Heart right ventricle (tissue), 16 donors: ENCODE measurements at regions of chr2 and their contacts with region 1.

Region 1: DNA sequence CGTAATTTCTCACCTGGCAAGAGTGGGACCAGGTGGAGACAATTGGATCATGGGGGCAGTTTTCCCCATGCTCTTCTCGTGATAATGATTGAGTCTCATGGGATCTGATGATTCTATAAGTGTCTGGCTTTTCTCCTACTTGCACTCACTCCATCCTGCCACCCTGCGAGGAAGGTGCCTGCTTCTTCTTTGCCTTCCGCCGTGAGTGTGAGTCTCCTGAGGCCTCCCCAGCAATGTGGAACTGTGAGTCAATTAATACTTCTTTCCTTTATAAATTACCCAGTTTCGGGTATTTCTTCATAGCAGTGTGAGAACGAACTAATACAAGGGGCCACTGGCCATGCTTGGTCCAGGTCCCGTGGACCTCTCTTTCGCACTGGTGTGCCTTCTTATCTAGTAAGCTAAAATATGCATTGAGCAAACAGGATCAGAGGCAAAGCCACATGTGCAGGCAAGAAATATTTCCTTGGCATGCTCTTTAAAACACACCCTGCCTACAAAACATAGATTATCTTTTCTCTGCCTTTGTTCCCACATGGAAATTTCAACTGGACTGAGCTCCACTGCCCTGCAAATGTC is 821.1 kb downstream of the TRIB2 start:
- DNase-seq: no peak
- ATAC-seq: no peak
- H3K4me3 ChIP-seq: no peak overlapping the region
- H3K27ac ChIP-seq: no peak overlapping the region
- H3K4me1 ChIP-seq: no peaks in the 10 kb centered on the region
- H3K27me3 ChIP-seq: no peaks in the 10 kb centered on the region
- CTCF ChIP-seq: no peak

Region 2: GRCh38 chr2:13401312-13401711 is 136.5 kb before region 1 on chr2:
- intact Hi-C with region 1: no loop called
- DNase-seq: no peak
- ATAC-seq: no peak
- H3K4me3 ChIP-seq: no peak overlapping the region
- H3K27ac ChIP-seq: no peak overlapping the region
- H3K4me1 ChIP-seq: no peaks in the 10 kb centered on the region
- H3K27me3 ChIP-seq: no peaks in the 10 kb centered on the region
- CTCF ChIP-seq: no peak

Region 3: DNA sequence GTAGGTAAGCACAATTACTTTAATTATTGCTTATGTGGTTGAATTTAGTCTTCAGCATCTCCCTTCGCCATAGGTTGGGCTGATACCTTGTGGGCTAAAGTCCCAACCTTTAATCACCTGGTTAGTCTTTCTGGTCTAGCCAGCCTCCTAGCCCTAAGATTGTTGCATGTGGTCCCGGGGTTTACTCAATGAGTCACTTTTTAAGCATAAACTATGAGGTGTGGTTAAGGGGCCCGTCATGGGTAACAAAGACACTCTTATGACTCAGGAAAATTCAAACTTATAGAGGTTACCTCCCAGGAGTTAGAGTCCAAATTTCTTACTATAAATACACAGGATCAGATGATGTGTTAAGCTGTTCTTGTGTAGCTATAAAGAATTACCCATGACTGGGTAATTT is 20.5 kb after region 1 on chr2:
- intact Hi-C with region 1: loop called in 1 of 10 experiments (anchors 2 kb)
- DNase-seq: no peak
- ATAC-seq: no peak
- H3K4me3 ChIP-seq: no peak overlapping the region
- H3K27ac ChIP-seq: no peak overlapping the region
- H3K4me1 ChIP-seq: no peaks in the 10 kb centered on the region
- H3K27me3 ChIP-seq: no peaks in the 10 kb centered on the region
- CTCF ChIP-seq: no peak

Region 4: DNA sequence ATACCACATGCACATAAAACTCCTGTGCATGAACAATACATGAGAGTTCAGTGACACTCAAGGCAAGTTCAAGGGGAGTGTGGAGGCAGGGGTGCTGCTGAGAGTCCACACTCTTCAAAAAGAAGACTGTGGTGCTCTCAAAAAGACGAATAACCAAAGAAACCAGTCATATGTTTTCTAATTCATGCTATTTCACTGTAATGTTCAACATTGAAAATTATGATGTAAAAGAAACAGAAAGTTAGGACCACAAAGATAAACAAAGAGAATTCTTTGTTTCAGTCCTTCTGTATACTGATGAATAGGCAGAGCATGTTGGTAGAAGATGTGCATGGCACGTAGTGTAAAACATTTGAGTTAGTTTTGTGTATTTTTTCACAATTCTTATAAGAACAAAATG is 230.4 kb after region 1 on chr2:
- intact Hi-C with region 1: no loop called
- DNase-seq: no peak
- ATAC-seq: no peak
- H3K4me3 ChIP-seq: no peak overlapping the region
- H3K27ac ChIP-seq: no peak overlapping the region
- H3K4me1 ChIP-seq: no peaks in the 10 kb centered on the region
- H3K27me3 ChIP-seq: no peaks in the 10 kb centered on the region
- CTCF ChIP-seq: no peak